Posterior cingulate gyrus (tissue), 11 donors: ENCODE measurements at regions of chr11 and their contacts with region 1.

Region 1: GRCh38 chr11:86068951-86069407 is at the start of gene PICALM:
- DNase-seq: peak; percentile 96 to 100 (median 98)

Region 2: GRCh38 chr11:85947431-85948272 is 121.3 kb before region 1 on chr11:
- intact Hi-C with region 1: loop called (anchors 5 kb)
- DNase-seq: no peak

Region 3: DNA sequence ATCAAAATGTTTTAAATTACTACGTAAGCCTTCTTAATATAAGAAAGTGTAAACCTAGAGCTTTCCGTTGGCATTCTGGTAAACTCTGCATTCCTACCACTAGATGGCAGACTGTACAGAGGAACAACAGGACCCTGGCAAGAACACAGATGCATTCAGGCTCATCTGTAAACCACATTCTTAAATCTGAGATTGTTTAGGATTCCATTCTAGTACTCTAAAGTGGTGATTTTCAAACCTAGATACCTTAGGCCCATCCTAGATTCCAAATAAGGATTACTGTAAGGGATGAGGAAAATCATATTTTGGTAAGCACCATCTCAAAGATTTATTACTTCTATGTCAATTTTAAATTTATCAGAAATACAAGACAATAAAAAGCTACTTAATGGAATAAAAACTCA is 27.0 kb before region 1 on chr11:
- intact Hi-C with region 1: loop called (anchors 2 kb)
- DNase-seq: peak in 3 of 10 donors; percentile 21 to 46 (median 36)

Region 4: GRCh38 chr11:86151174-86152005 is 82.4 kb after region 1 on chr11:
- intact Hi-C with region 1: loop called (anchors 1 kb)
- DNase-seq: peak in 9 of 10 donors; percentile 36 to 86 (median 45)

Region 5: DNA sequence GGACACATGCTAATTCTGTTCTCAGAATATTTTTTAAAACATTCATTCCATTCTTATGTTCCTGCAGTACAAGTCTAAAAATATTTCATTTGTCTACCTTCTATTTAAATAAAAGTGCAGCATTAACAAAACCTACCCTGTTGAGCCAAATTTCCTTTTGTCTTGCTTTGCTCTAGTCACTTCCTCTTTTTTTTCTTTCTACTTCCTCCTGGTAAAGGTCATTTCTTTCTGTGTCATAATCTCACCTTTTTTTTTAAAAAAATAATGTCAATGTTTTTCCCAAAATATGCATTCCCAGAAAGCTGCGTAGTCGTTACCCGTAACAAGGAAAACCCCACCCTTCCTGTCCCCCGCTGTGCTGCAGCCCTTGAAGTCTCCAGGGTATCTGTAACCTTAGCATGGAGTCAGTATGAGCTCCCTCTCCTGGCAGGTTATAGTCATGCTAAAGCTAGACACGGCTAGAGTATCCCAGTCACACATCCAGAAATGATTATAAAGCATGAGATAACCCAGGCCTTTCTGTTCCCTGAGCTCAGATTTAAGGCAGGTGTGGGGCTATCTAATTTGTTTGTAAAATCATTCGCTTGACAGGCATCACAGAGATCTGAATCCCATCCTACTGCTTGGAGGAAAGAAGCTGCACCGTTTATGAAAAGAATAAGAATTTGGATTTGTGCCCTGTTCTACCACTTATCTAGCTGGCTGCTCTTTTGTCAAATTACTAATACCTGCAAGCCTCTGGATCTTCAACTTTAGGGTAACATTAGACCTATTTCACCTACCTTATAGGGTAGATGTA is 124.5 kb after region 1 on chr11:
- intact Hi-C with region 1: loop called (anchors 5 kb)
- DNase-seq: peak in 5 of 10 donors; percentile 23 to 62 (median 40)